ENCODE measurements at regions of chr5 and their contacts with region 1.

Region 1: DNA sequence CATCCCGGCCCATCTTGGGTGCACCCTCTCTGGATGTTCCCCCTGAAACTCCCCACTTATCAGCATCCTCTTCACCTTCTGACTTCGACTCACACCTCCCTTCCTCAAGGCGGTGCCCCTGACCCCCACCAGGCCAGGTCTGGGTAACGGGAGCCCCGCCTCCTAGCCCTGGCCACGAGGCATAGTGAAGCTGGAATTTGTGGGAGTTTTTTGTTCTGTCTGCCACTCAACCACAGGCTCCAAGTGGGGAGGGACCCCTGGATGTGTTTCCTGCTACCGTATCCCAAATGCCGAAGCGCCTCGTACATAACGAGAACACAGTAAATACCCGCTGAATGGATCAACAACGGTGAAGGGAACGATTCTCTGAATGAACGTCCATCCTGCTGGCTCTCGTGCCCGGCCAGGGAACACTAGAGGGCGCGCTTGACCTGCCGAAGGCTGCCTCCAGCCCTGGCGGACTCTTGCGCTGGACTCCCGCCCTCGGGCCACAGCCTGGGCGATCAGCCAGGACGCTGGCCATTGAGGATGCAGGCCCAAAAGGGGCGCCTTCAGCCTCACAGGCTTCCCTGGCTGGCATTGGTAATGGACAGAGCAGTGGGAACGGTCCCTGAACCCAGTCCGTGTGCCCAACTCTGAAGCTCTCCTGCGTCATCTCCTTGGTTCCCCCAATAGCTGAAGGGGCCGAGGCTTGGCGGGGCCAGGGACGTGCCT is 47.3 kb upstream of the PHYKPL start:
- DNase-seq: peak; percentile 94
- ATAC-seq: peak; percentile 91

Region 2: DNA sequence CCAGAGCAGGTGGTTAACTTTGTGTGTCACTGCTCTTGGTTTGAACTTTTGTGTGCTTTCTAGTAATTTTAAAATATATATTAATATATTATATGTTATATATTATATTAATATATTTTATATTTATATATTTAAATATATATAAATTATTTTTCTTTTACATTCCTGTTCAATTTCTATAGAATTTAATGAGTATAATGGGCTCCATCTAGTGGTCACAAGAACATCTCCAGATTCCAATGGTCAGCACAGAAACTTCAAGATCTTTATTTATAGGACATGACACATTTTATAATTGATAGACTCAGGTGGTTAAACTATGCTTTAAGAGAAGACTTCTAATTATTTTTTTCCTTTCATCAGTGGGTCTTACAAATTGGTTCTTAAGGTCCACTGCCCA is 271.2 kb after region 1 on chr5:
- intact Hi-C with region 1: loop called (anchors 5 kb)
- DNase-seq: no peak
- ATAC-seq: no peak

Region 3: GRCh38 chr5:178590141-178590923 is 310.4 kb after region 1 on chr5 and contains the start of gene COL23A1:
- intact Hi-C with region 1: loop called (anchors 2 kb)
- DNase-seq: peak; percentile 81
- ATAC-seq: peak; percentile 89
- total RNA-seq, gene COL23A1: 18.8 TPM

Region 4: GRCh38 chr5:178849316-178849715 is 569.4 kb after region 1 on chr5:
- intact Hi-C with region 1: loop called (anchors 10 kb)
- DNase-seq: no peak
- ATAC-seq: no peak